ENCODE measurements at regions of chr2 and their contacts with region 1.

Region 1: GRCh38 chr2:230847883-230848388 is 16.8 kb upstream of the ITM2C start:
- H3K4me3 ChIP-seq: no peak overlapping the region
- H3K27ac ChIP-seq: no peak overlapping the region
- H3K4me1 ChIP-seq: no peaks in the 10 kb centered on the region
- CTCF ChIP-seq: peak; percentile 84

Region 2: GRCh38 chr2:230824406-230824978 is 23.4 kb before region 1 on chr2:
- CTCF ChIA-PET with region 1: interaction called, 14 read pairs
- POLR2A ChIA-PET with region 1: no interaction called
- H3K4me3 ChIP-seq: no peak overlapping the region
- H3K27ac ChIP-seq: no peak overlapping the region
- H3K4me1 ChIP-seq: no peaks in the 10 kb centered on the region
- CTCF ChIP-seq: peak; percentile 73

Region 3: DNA sequence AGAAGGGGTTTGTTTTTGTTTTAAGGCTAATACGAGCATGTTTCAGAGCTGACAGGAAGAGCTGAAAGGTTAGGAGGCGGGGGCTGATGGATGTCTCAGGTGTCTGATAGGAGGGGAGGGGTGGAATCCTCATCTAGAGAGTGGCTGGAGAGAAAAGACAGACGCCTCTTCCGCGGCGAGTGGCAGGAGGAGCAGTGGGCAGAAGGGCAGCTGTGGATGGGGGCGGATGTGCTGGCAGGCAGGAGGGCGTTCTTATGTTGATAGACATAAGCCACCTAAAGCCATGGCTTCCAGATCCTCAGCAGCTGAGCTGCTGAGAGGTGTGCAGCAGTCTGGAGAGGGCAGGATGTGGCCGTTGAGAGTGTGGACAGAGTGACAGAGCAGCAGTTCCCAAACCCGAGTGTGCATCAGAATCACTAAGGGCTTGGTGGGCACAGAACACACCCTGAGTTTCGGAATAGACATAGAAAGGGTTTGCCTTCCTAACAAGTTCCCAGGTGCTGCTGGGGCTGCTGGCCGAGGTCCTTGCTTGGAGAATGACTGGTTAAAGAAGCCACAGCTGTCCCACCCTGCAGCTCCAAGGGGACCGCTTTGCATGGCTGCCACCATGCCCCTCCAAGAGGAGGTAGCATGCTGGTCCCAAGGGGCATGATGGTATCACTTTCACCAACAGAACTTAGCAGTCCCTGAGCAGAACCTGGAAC is 13.8 kb after region 1 on chr2:
- CTCF ChIA-PET with region 1: interaction called, 11 read pairs
- POLR2A ChIA-PET with region 1: interaction called, 3 read pairs
- H3K4me3 ChIP-seq: no peak overlapping the region
- H3K27ac ChIP-seq: no peak overlapping the region
- H3K4me1 ChIP-seq: peaks cover 8% of the 10 kb centered on the region
- CTCF ChIP-seq: no peak

Measured in HEK293 (cell line).